ENCODE measurements at regions of chr19 and their contacts with region 1.

Region 1: GRCh38 chr19:1837625-1838105 is 10.6 kb downstream of the REXO1 start:
- DNase-seq: peak; percentile 69
- ATAC-seq: peak; percentile 65
- H3K4me3 Mint-ChIP-seq: no peak overlapping the region
- H3K27ac Mint-ChIP-seq: no peak overlapping the region
- H3K4me1 Mint-ChIP-seq: peaks cover 13% of the 10 kb centered on the region
- H3K27me3 Mint-ChIP-seq: no peaks in the 10 kb centered on the region

Region 2: GRCh38 chr19:1848399-1849131 is 10.9 kb after region 1 on chr19 and contains the start of gene REXO1:
- CTCF ChIA-PET with region 1: interaction called, 20 read pairs
- POLR2A ChIA-PET with region 1: no interaction called
- DNase-seq: peak; percentile 98
- ATAC-seq: peak; percentile 72
- H3K4me3 Mint-ChIP-seq: peak within 1 kb of the TSS; percentile 91
- H3K27ac Mint-ChIP-seq: peak within 1 kb of the TSS; percentile 96
- H3K4me1 Mint-ChIP-seq: peaks cover 55% of the 10 kb centered on the region
- H3K27me3 Mint-ChIP-seq: no peaks in the 10 kb centered on the region
- total RNA-seq, gene REXO1: 47.9 to 52.9 TPM

Region 3: GRCh38 chr19:1855040-1855827 is 17.6 kb after region 1 on chr19:
- CTCF ChIA-PET with region 1: interaction called, 20 read pairs
- POLR2A ChIA-PET with region 1: no interaction called
- DNase-seq: peak; percentile 94
- ATAC-seq: peak; percentile 80
- H3K4me3 Mint-ChIP-seq: peak overlapping the region; percentile 83
- H3K27ac Mint-ChIP-seq: peak overlapping the region; percentile 95
- H3K4me1 Mint-ChIP-seq: peaks cover 71% of the 10 kb centered on the region
- H3K27me3 Mint-ChIP-seq: no peaks in the 10 kb centered on the region

Measured in activated CD8-positive, alpha-beta T cell treated with anti-CD3 and anti-CD28 coated beads, Interleukin-2, amount 10 ng/mL, durations not matched to agents 7 days and 5 days (primary cell).